PC-3 (cell line): ENCODE measurements at regions of chr12 and their contacts with region 1.

Region 1: DNA sequence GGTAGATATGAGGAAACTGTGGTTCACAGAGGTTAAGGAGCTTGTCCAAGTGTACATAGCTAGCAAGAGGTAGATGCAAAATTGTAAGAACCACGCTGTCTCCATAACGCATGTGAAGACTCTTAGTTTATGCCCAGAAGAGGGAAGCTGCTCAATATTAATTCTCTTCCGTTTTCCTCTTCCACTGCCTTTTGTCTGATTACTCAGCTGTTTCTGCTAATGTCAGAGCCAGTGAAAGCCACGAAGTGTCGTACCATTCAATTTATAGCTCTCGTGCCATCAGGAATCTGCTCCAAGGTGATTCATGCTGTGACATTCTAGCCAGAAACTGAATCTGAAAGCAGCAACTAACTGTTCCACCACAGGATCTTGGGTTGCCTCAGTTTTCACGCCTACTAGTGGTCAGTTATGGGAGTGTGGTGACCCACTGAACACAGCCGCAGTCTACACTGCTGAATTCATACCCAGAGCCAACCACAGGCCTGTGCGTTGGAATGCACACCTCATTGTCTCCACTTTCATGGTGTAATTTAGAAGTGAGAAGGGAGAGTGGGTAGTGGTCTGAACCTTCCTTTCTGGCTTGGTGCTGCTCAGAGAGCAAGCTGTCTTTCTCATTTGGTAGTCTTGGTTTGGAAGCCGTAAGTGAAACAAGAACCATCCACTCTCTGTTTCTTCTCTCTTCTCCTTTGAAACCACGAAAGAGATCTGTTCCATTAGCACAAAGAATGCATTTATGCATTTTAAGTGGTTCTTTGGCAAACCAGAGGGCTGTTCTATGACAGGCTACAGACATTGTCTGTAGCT is 74.2 kb upstream of the NAP1L1 start:
- DNase-seq: peak; percentile 80
- ATAC-seq: peak; percentile 98
- H3K4me3 ChIP-seq: no peak overlapping the region
- H3K27ac ChIP-seq: no peak overlapping the region
- H3K4me1 ChIP-seq: no peaks in the 10 kb centered on the region; the same call in 1 of the 2 replicates
- H3K27me3 ChIP-seq: no peaks in the 10 kb centered on the region
- CTCF ChIP-seq: peak; percentile 91

Region 2: GRCh38 chr12:76144245-76144549 is 14.5 kb before region 1 on chr12:
- CTCF ChIA-PET with region 1: no interaction called
- POLR2A ChIA-PET with region 1: no interaction called
- intact Hi-C with region 1: no loop called
- DNase-seq: peak; percentile 32
- ATAC-seq: no peak
- H3K4me3 ChIP-seq: no peak overlapping the region
- H3K27ac ChIP-seq: no peak overlapping the region
- H3K4me1 ChIP-seq: no peaks in the 10 kb centered on the region
- H3K27me3 ChIP-seq: no peaks in the 10 kb centered on the region
- CTCF ChIP-seq: no peak

Region 3: DNA sequence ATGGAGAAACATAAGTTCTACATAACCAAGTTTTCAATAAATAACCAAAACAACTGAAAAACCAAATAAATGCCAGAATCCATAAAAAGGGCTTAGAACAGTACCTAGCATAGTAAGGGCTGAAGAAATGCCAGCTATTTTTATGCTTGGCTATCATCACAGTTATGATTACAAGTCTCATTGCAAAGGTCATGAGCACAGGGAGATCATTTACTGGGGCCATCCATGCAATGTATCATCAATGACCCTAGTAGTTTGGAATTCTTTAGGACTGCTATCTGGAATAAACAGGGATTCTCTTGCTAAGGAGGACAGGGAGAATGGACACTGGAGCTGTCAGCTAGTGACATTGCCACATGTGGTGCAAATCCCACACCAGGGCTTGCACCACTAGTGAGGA is 18.2 kb after region 1 on chr12:
- CTCF ChIA-PET with region 1: no interaction called
- POLR2A ChIA-PET with region 1: interaction called, 14 read pairs
- intact Hi-C with region 1: no loop called
- DNase-seq: no peak
- ATAC-seq: no peak
- H3K4me3 ChIP-seq: no peak overlapping the region
- H3K27ac ChIP-seq: no peak overlapping the region
- H3K4me1 ChIP-seq: no peaks in the 10 kb centered on the region
- H3K27me3 ChIP-seq: no peaks in the 10 kb centered on the region
- CTCF ChIP-seq: no peak

Region 4: DNA sequence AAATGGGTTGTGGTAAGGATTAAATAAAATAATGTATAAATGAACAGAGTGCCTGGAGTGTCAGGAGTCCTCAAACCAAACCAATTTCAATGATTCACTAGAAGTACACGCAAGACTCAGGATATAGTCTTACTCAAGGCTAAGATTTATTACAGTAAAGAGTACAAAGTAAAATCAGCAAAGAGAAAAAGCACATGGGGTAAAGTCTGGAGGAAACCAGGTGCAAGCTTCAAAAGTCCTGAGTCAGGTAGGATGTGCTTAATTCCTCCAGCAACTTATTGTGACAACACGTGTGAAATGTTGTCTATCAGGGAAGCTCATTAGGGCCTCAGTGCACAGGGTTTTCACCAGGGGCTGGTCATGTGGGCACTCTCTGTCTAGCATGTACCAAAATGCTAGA is 31.6 kb after region 1 on chr12:
- CTCF ChIA-PET with region 1: no interaction called
- POLR2A ChIA-PET with region 1: no interaction called
- intact Hi-C with region 1: no loop called
- DNase-seq: no peak
- ATAC-seq: no peak
- H3K4me3 ChIP-seq: no peak overlapping the region
- H3K27ac ChIP-seq: no peak overlapping the region
- H3K4me1 ChIP-seq: no peaks in the 10 kb centered on the region
- H3K27me3 ChIP-seq: no peaks in the 10 kb centered on the region
- CTCF ChIP-seq: no peak

Region 5: GRCh38 chr12:76206677-76207072 is 48.0 kb after region 1 on chr12:
- CTCF ChIA-PET with region 1: no interaction called
- POLR2A ChIA-PET with region 1: no interaction called
- intact Hi-C with region 1: no loop called
- DNase-seq: no peak
- ATAC-seq: no peak
- H3K4me3 ChIP-seq: no peak overlapping the region
- H3K27ac ChIP-seq: no peak overlapping the region
- H3K4me1 ChIP-seq: no peaks in the 10 kb centered on the region
- H3K27me3 ChIP-seq: no peaks in the 10 kb centered on the region
- CTCF ChIP-seq: no peak

Region 6: DNA sequence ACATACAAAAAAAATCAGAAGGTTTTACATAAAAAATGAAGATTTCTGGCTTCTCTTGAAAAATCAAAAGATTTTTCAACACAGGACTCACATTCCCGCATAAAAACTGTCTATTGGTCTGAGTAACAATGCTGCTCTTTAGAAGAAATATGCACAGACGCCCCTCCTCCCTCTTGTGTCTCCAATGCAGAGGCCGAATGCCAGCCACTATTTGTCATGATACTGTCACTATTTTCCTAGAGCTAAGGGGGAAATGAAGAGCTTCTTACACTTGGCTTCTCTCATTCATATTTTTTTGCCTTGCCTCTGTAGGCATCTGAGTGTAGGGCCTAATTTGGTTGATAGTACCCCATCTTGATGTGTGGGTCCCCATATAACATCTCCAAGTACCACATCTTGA is 91.5 kb after region 1 on chr12:
- CTCF ChIA-PET with region 1: no interaction called
- POLR2A ChIA-PET with region 1: no interaction called
- intact Hi-C with region 1: no loop called
- DNase-seq: peak; percentile 84
- ATAC-seq: peak; percentile 91
- H3K4me3 ChIP-seq: no peak overlapping the region
- H3K27ac ChIP-seq: no peak overlapping the region
- H3K4me1 ChIP-seq: 0 out of 2 replicates have a peak, but pooled peaks cover 3% of the 10 kb centered on the region
- H3K27me3 ChIP-seq: no peaks in the 10 kb centered on the region
- CTCF ChIP-seq: no peak